T-cell (primary cell): ENCODE measurements at regions of chr12 and their contacts with region 1.

Region 1: GRCh38 chr12:6540181-6540877 is 6.0 kb downstream of the GAPDH start:
- DNase-seq: peak in 9 of 35 experiments; percentile 14 to 59 (median 42)
- ATAC-seq: peak; percentile 48 to 61 (median 53)
- H3K4me3 ChIP-seq: peak overlapping the region; percentile 3 to 18
- H3K4me3 Mint-ChIP-seq: peak overlapping the region; percentile 63 to 72 (median 70)
- H3K27ac ChIP-seq: peak overlapping the region; percentile 29
- H3K27ac Mint-ChIP-seq: peak overlapping the region; percentile 81 to 88
- H3K4me1 ChIP-seq: peaks cover 31 to 60% of the 10 kb centered on the region in 2 experiments
- H3K4me1 Mint-ChIP-seq: peaks cover 46 to 65% (median 47%) of the 10 kb centered on the region in 3 donors
- H3K27me3 ChIP-seq: no peaks in the 10 kb centered on the region
- H3K27me3 Mint-ChIP-seq: no peaks in the 10 kb centered on the region

Region 2: DNA sequence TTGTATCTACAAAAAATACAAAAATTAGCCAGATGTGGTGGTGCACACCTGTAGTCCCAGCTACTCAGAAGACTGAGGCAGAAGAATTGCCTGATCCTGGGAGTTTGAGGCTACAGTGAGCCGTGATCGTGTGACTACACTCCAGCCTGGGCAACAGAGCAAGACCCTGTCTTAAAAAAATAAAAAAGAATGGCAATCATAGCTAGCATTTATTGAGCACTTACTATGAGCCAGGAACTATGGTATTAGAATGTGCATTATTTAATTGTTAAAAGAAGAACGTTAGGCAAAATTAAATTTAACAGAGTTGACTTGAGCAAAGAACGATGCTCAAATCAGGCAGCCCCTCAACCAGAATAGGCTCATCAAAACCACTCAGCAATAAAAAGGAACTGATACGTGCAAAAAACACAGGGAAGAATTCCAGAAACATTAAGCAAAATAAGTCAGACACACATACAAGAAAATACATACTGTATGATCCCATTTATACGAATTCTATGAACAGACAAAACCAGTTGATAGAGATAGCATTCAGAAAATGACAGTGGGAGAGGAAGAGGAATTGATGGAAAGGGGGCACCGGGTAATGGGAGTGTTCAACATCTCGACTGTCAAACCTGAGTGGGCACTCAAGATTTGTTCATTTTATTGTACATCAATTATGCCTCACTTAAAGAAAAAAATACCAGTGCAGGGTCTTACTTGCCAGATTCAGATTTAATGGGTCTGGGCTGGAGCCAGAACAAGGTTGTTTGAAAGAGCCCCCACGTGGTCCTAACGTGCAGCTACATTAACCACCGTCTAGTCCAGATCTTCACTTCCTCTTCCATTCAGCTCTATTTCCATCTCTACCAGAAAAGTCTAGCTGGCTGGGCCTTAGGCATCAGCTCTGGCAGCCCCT is 173.0 kb before region 1 on chr12:
- CTCF ChIA-PET with region 1: interaction called, 3 to 11 read pairs
- POLR2A ChIA-PET with region 1: no interaction called
- DNase-seq: peak in 28 of 35 experiments; percentile 20 to 73 (median 39)
- ATAC-seq: peak; percentile 58 to 65 (median 62)
- H3K4me3 ChIP-seq: no peak overlapping the region
- H3K4me3 Mint-ChIP-seq: no peak overlapping the region
- H3K27ac ChIP-seq: peak overlapping the region; percentile 54
- H3K27ac Mint-ChIP-seq: peak overlapping the region; percentile 36 to 81
- H3K4me1 ChIP-seq: peaks cover 9 to 40% of the 10 kb centered on the region in 2 experiments
- H3K4me1 Mint-ChIP-seq: peaks cover 20 to 30% (median 28%) of the 10 kb centered on the region in 3 donors
- H3K27me3 ChIP-seq: no peaks in the 10 kb centered on the region
- H3K27me3 Mint-ChIP-seq: no peaks in the 10 kb centered on the region

Region 3: GRCh38 chr12:6396031-6396430 is 144.3 kb before region 1 on chr12:
- CTCF ChIA-PET with region 1: no interaction called
- POLR2A ChIA-PET with region 1: no interaction called
- DNase-seq: no peak
- ATAC-seq: no peak
- H3K4me3 ChIP-seq: no peak overlapping the region
- H3K4me3 Mint-ChIP-seq: no peak overlapping the region
- H3K27ac ChIP-seq: no peak overlapping the region
- H3K27ac Mint-ChIP-seq: no peak overlapping the region
- H3K4me1 ChIP-seq: no peaks in the 10 kb centered on the region
- H3K4me1 Mint-ChIP-seq: no peaks in the 10 kb centered on the region
- H3K27me3 ChIP-seq: no peaks in the 10 kb centered on the region
- H3K27me3 Mint-ChIP-seq: no peaks in the 10 kb centered on the region

Region 4: GRCh38 chr12:6423267-6424007 is 116.9 kb before region 1 on chr12:
- CTCF ChIA-PET with region 1: interaction called, 8 to 31 read pairs
- POLR2A ChIA-PET with region 1: interaction called in 1 of 2 experiments, 4 read pairs
- DNase-seq: peak; percentile 56 to 95 (median 73)
- ATAC-seq: peak; percentile 74 to 82 (median 75)
- H3K4me3 ChIP-seq: no peak overlapping the region
- H3K4me3 Mint-ChIP-seq: peak overlapping the region in 1 of 3 donors; percentile 44
- H3K27ac ChIP-seq: peak overlapping the region; percentile 3
- H3K27ac Mint-ChIP-seq: peak overlapping the region; percentile 54 to 83
- H3K4me1 ChIP-seq: peaks cover 24 to 43% of the 10 kb centered on the region in 2 experiments
- H3K4me1 Mint-ChIP-seq: peaks cover 37 to 44% (median 38%) of the 10 kb centered on the region in 3 donors
- H3K27me3 ChIP-seq: no peaks in the 10 kb centered on the region
- H3K27me3 Mint-ChIP-seq: peaks cover 0 to 2% of the 10 kb centered on the region in 2 donors

Region 5: DNA sequence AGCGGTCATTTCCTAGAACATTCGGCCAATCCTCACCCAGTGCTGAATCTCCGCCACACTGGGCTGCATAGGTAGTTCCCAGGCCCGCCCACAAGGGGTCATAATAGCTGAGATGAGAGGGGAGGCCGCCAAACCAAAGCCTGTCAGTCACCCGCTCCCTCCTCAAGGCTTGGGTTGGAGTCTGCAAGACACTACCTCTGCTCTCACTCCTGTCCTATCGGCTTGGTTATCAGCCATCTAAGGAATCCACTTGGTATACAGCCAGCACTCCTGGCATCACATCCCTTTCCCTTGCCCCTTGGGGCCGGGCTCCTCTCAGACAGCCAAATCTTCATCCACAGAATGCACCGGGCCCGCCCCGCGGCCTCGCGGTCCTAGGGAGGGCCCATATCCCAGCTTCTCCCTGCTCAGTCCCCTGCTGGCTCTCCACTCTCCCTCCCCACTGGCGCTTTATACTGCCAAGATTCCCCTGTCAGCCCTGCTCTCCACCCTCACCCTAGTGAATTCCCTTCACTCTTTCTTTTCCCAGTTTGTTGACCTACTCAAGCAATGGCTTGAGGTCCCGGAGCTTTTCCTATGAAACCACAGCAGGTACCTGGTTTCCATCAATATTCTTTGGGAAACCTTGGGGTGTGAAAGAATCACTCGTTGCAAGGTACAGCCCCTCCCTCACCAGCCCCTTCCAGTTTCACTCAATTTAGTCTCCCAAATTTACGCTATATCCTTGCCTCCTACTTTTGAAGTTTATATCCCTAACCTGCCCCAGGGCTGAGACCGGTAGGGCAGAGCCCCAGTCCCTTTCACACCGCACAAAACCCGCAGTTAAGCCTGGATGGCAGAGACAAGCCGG is 14.1 kb after region 1 on chr12:
- CTCF ChIA-PET with region 1: interaction called, 9 to 13 read pairs
- POLR2A ChIA-PET with region 1: interaction called in 1 of 2 experiments, 3 read pairs
- DNase-seq: peak in 34 of 35 experiments; percentile 32 to 79 (median 59)
- ATAC-seq: peak; percentile 46 to 61 (median 58)
- H3K4me3 ChIP-seq: peak overlapping the region; percentile 70 to 81
- H3K4me3 Mint-ChIP-seq: peak overlapping the region; percentile 89 to 93 (median 90)
- H3K27ac ChIP-seq: no peak overlapping the region
- H3K27ac Mint-ChIP-seq: peak overlapping the region; percentile 75 to 84
- H3K4me1 ChIP-seq: peaks cover 15 to 69% of the 10 kb centered on the region in 2 experiments
- H3K4me1 Mint-ChIP-seq: peaks cover 50 to 59% (median 50%) of the 10 kb centered on the region in 3 donors
- H3K27me3 ChIP-seq: no peaks in the 10 kb centered on the region
- H3K27me3 Mint-ChIP-seq: no peaks in the 10 kb centered on the region